PC-3 (cell line): ENCODE measurements at regions of chr4 and their contacts with region 1.

Region 1: GRCh38 chr4:86338989-86339388 is 20.9 kb downstream of the MAPK10 start:
- DNase-seq: peak; percentile 87
- ATAC-seq: peak; percentile 100
- H3K4me3 ChIP-seq: no peak overlapping the region
- H3K27ac ChIP-seq: peak overlapping the region; percentile 51
- H3K4me1 ChIP-seq: peaks cover 18% of the 10 kb centered on the region
- H3K27me3 ChIP-seq: no peaks in the 10 kb centered on the region
- CTCF ChIP-seq: no peak

Region 2: DNA sequence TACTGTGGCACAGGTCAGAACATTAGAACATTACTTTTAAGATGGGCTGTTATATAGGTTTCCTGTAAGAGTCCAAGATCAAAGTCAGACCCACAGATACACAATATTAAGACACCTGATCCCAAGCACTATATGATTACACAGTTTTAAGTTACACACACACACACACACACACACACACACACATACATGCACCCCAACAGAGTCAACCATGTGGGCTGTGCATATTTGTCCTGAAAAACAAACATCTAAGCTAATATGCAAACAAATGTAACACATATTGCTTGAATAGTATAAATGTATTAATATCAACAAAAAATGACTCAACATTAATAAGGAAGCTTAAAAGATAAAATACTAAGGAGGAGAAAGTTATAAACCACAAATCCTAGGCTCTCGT is 28.1 kb before region 1 on chr4:
- CTCF ChIA-PET with region 1: no interaction called
- POLR2A ChIA-PET with region 1: no interaction called
- intact Hi-C with region 1: loop called (anchors 2 kb)
- DNase-seq: peak; percentile 20
- ATAC-seq: peak; percentile 82
- H3K4me3 ChIP-seq: no peak overlapping the region
- H3K27ac ChIP-seq: no peak overlapping the region
- H3K4me1 ChIP-seq: no peaks in the 10 kb centered on the region
- H3K27me3 ChIP-seq: no peaks in the 10 kb centered on the region
- CTCF ChIP-seq: no peak

Region 3: GRCh38 chr4:86386817-86387415 is 47.9 kb after region 1 on chr4:
- CTCF ChIA-PET with region 1: no interaction called
- POLR2A ChIA-PET with region 1: no interaction called
- intact Hi-C with region 1: loop called (anchors 5 kb)
- DNase-seq: no peak
- ATAC-seq: no peak
- H3K4me3 ChIP-seq: no peak overlapping the region
- H3K27ac ChIP-seq: no peak overlapping the region
- H3K4me1 ChIP-seq: no peaks in the 10 kb centered on the region; the same call in 1 of the 2 replicates
- H3K27me3 ChIP-seq: no peaks in the 10 kb centered on the region
- CTCF ChIP-seq: no peak

Region 4: DNA sequence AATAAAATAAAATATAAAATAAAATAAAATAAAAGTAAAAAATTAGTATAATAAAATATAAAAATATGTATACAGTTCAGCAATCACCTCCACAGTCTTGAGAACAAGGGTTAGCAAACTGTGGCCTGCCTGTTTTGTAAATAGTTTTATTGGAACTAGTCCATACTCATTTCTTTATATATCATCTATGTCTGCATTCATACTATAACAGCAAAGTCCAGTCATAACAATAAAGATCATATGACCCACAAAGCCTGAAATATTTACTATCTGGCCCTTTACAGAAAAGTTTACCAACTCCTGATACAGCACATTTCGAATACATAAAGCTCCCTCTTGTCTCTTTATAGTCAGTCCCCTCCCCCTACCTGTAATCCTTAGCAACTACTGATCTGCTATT is 398.3 kb after region 1 on chr4:
- CTCF ChIA-PET with region 1: no interaction called
- POLR2A ChIA-PET with region 1: no interaction called
- intact Hi-C with region 1: no loop called
- DNase-seq: no peak
- ATAC-seq: no peak
- H3K4me3 ChIP-seq: no peak overlapping the region
- H3K27ac ChIP-seq: no peak overlapping the region
- H3K4me1 ChIP-seq: no peaks in the 10 kb centered on the region
- H3K27me3 ChIP-seq: no peaks in the 10 kb centered on the region
- CTCF ChIP-seq: no peak